Activated B cell treated with CpG ODN at 0.5 μM for 24 hours (primary cell): ENCODE measurements at regions of chr15 and their contacts with region 1.

Region 1: GRCh38 chr15:66619151-66619903 is 53.5 kb upstream of the LCTL start:
- DNase-seq: peak; percentile 27
- ATAC-seq: peak; percentile 54
- H3K4me3 Mint-ChIP-seq: no peak overlapping the region
- H3K27ac Mint-ChIP-seq: no peak overlapping the region
- H3K4me1 Mint-ChIP-seq: peaks cover 33% of the 10 kb centered on the region
- H3K27me3 Mint-ChIP-seq: peaks cover 25% of the 10 kb centered on the region
- CTCF ChIP-seq: no peak

Region 2: GRCh38 chr15:66774001-66774814 is 154.9 kb after region 1 on chr15:
- CTCF ChIA-PET with region 1: interaction called, 13 read pairs
- POLR2A ChIA-PET with region 1: no interaction called
- intact Hi-C with region 1: loop called (anchors 1 kb)
- DNase-seq: peak; percentile 23
- ATAC-seq: peak; percentile 56
- H3K4me3 Mint-ChIP-seq: no peak overlapping the region
- H3K27ac Mint-ChIP-seq: no peak overlapping the region
- H3K4me1 Mint-ChIP-seq: no peaks in the 10 kb centered on the region
- H3K27me3 Mint-ChIP-seq: no peaks in the 10 kb centered on the region
- CTCF ChIP-seq: no peak

Region 3: GRCh38 chr15:67024314-67024997 is 405.1 kb after region 1 on chr15:
- CTCF ChIA-PET with region 1: no interaction called
- POLR2A ChIA-PET with region 1: no interaction called
- intact Hi-C with region 1: no loop called
- DNase-seq: no peak
- ATAC-seq: no peak
- H3K4me3 Mint-ChIP-seq: no peak overlapping the region
- H3K27ac Mint-ChIP-seq: no peak overlapping the region
- H3K4me1 Mint-ChIP-seq: peaks cover 3% of the 10 kb centered on the region
- H3K27me3 Mint-ChIP-seq: no peaks in the 10 kb centered on the region
- CTCF ChIP-seq: no peak